ENCODE measurements at regions of chr9 and their contacts with region 1.

Region 1: GRCh38 chr9:110808599-110808980 is 140.0 kb downstream of the MUSK start:
- DNase-seq: peak; percentile 93
- ATAC-seq: peak; percentile 90
- H3K4me3 ChIP-seq: 0 out of 2 replicates have a peak overlapping the region, but pooled peaks have one; percentile 28
- H3K27ac ChIP-seq: peak overlapping the region; percentile 90
- H3K4me1 ChIP-seq: peaks cover 18% of the 10 kb centered on the region
- H3K27me3 ChIP-seq: no peaks in the 10 kb centered on the region
- CTCF ChIP-seq: no peak
- EP300 ChIP-seq: peak; percentile 97 to 98
- POLR2A ChIP-seq: no peak
- RAD21 ChIP-seq: no peak; the same call in 1 of the 2 replicates

Region 2: DNA sequence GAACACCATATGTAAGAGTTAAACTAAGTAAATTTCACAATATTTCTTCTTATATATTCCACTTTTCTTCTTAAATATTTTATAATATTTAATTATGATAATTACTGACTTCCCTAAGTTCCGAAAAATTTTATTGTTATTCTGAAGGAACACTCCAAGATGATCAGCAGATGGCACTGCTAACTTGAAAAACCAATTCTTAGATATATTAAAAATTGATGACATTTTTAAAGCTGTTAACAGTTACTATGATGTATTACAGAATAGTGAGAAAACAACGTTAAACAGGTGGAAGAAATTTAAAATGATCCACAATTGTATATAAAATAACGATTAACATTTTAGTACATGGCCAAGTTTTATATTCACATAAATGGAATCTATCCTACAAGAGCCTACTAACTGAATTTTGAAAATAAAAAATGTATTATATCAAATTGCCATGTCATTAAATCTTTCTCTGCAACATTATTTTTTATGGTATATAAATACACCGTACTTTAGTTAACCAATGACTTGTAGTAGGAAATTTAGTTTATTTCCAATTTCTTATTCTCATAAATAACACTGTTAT is 170.1 kb before region 1 on chr9:
- CTCF ChIA-PET with region 1: interaction called, 4 read pairs
- POLR2A ChIA-PET with region 1: no interaction called
- RAD21 ChIA-PET with region 1: interaction called, 17 read pairs
- SMC1A ChIA-PET with region 1: interaction called, 11 read pairs
- in situ Hi-C with region 1: no loop called
- intact Hi-C with region 1: loop called (anchors 2 kb)
- DNase-seq: no peak
- ATAC-seq: peak; percentile 43; the same call in 1 of the 3 replicates
- H3K4me3 ChIP-seq: no peak overlapping the region
- H3K27ac ChIP-seq: no peak overlapping the region
- H3K4me1 ChIP-seq: no peaks in the 10 kb centered on the region
- H3K27me3 ChIP-seq: no peaks in the 10 kb centered on the region
- CTCF ChIP-seq: peak in 2 of 3 experiments; percentile 11 to 21; a peak in 3 of 6 replicates
- EP300 ChIP-seq: no peak
- POLR2A ChIP-seq: no peak
- RAD21 ChIP-seq: peak; percentile 81

Region 3: GRCh38 chr9:110821064-110821463 is 12.5 kb after region 1 on chr9:
- CTCF ChIA-PET with region 1: interaction called, 13 read pairs
- POLR2A ChIA-PET with region 1: interaction called, 3 read pairs
- RAD21 ChIA-PET with region 1: interaction called, 5 read pairs
- SMC1A ChIA-PET with region 1: interaction called, 8 read pairs
- in situ Hi-C with region 1: no loop called
- intact Hi-C with region 1: no loop called
- DNase-seq: no peak
- ATAC-seq: peak; percentile 98
- H3K4me3 ChIP-seq: no peak overlapping the region
- H3K27ac ChIP-seq: no peak overlapping the region
- H3K4me1 ChIP-seq: no peaks in the 10 kb centered on the region
- H3K27me3 ChIP-seq: no peaks in the 10 kb centered on the region
- CTCF ChIP-seq: no peak
- EP300 ChIP-seq: no peak
- POLR2A ChIP-seq: no peak
- RAD21 ChIP-seq: no peak

Region 4: DNA sequence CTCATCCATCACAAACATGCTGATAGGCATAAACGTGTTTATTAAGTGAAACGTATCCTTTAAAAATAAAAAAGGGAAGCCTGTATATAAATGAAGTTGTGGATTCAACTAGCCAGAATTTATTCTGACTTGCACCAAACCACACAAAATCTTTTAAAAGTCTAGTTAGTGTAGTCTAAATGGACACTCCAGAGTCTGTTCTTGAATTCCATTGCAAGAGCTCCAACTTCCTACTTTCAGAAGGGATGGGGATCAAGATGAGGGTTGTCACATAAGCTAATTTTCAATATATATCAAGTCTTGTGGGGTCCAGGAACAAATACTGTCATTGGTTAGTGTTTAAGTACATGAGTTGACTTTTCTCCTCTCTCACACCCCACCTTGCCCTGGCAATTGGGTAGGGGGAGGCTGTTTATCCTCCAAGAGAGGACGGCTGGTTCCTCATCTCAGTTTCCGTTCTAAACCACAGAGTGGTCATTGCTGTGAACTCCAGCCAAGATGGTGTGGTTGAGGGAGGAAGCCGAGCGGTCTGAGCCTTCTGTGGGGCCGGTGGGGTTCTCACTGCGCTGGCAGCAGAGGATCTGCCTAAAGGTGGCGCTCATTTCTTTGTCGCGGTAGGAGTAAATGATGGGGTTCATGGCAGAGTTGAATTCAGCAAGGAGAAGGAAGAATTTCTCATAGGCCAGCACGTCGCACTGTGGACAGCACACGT is 66.5 kb after region 1 on chr9:
- CTCF ChIA-PET with region 1: interaction called, 3 read pairs
- POLR2A ChIA-PET with region 1: interaction called, 4 read pairs
- RAD21 ChIA-PET with region 1: no interaction called
- SMC1A ChIA-PET with region 1: interaction called, 3 read pairs
- in situ Hi-C with region 1: no loop called
- intact Hi-C with region 1: loop called (anchors 2 kb)
- DNase-seq: peak; percentile 48
- ATAC-seq: peak; percentile 95
- H3K4me3 ChIP-seq: no peak overlapping the region
- H3K27ac ChIP-seq: no peak overlapping the region
- H3K4me1 ChIP-seq: peaks cover 4% of the 10 kb centered on the region; the same call in 1 of the 2 replicates
- H3K27me3 ChIP-seq: no peaks in the 10 kb centered on the region
- CTCF ChIP-seq: peak; percentile 39 to 59 (median 40); a peak in 5 of 6 replicates
- EP300 ChIP-seq: 0 out of 4 replicates have a peak, but pooled peaks of 1 of the 2 experiments have one; percentile 48
- POLR2A ChIP-seq: no peak
- RAD21 ChIP-seq: peak; percentile 79

Region 5: DNA sequence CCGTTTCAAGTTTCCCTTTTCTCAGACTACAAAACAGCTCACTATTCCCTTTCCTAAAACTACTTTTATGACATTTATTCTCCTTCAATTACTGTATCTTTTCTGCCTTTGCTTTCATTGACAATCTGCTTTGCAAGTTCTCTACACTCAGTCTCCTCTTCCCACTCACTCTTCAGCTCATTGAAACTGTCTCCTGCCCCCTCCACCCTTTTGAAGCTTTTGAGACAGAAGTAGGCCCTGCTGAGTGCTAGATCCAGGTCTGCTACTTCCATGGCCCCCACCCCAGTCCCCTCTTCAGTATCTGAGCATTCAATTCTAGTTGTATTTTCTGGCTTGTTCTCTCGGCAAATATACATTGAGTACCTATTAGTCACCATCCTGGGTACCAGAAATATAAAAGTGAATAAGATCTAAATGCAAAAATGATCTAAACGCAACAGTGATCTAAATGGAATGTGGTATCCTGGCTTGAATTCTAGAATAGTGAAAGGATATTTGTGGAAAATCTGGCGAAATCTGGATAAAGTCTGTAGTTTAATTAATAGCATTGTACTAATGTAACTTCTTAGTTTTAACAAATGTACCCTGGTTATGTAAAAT is 463.0 kb after region 1 on chr9:
- CTCF ChIA-PET with region 1: no interaction called
- POLR2A ChIA-PET with region 1: no interaction called
- RAD21 ChIA-PET with region 1: no interaction called
- SMC1A ChIA-PET with region 1: no interaction called
- in situ Hi-C with region 1: no loop called
- intact Hi-C with region 1: no loop called
- DNase-seq: no peak
- ATAC-seq: no peak
- H3K4me3 ChIP-seq: no peak overlapping the region
- H3K27ac ChIP-seq: no peak overlapping the region
- H3K4me1 ChIP-seq: no peaks in the 10 kb centered on the region
- H3K27me3 ChIP-seq: no peaks in the 10 kb centered on the region
- CTCF ChIP-seq: no peak
- EP300 ChIP-seq: no peak
- POLR2A ChIP-seq: no peak
- RAD21 ChIP-seq: no peak

Region 6: GRCh38 chr9:112689161-112689740 is 1880.7 kb after region 1 on chr9:
- CTCF ChIA-PET with region 1: no interaction called
- POLR2A ChIA-PET with region 1: no interaction called
- RAD21 ChIA-PET with region 1: no interaction called
- SMC1A ChIA-PET with region 1: no interaction called
- in situ Hi-C with region 1: no loop called
- intact Hi-C with region 1: no loop called
- DNase-seq: no peak
- ATAC-seq: no peak
- H3K4me3 ChIP-seq: no peak overlapping the region
- H3K27ac ChIP-seq: no peak overlapping the region
- H3K4me1 ChIP-seq: no peaks in the 10 kb centered on the region
- H3K27me3 ChIP-seq: no peaks in the 10 kb centered on the region
- CTCF ChIP-seq: no peak
- EP300 ChIP-seq: no peak
- POLR2A ChIP-seq: no peak
- RAD21 ChIP-seq: no peak

Measured in GM12878 (cell line).